ENCODE measurements at regions of chr3 and their contacts with region 1.

Region 1: GRCh38 chr3:69451594-69451993 is 65.7 kb upstream of the FRMD4B start:
- DNase-seq: peak; percentile 78
- H3K4me3 ChIP-seq: no peak overlapping the region
- H3K27ac ChIP-seq: peak overlapping the region in 1 of 2 experiments; percentile 94; a peak in 2 of 4 replicates
- H3K4me1 ChIP-seq: peaks cover 0 to 36% of the 10 kb centered on the region in 2 experiments; a peak in 2 of 4 replicates
- H3K27me3 ChIP-seq: no peaks in the 10 kb centered on the region
- CTCF ChIP-seq: peak; percentile 45
- EP300 ChIP-seq: peak in 1 of 2 experiments; percentile 98; a peak in 2 of 4 replicates
- RAD21 ChIP-seq: peak; percentile 76

Region 2: DNA sequence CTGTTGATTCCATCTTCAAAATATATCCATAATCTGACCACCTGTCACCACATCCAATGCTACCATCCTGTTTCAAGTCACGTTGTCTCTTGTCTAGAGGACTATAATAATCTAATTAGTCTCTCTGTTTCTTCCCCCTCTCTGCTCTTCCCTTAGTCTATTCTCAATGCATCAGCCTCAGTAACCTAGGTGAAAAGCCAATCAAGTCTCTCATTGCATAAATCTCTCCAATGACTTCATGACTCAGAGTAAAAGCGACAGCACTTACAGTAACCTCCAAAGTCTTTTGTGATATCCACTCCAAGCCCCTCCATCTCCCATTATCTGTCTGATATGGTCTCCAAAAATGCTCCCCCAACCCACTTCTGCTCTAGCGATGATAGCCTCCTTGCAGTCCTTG is 378.7 kb before region 1 on chr3:
- CTCF ChIA-PET with region 1: no interaction called
- POLR2A ChIA-PET with region 1: no interaction called
- DNase-seq: no peak
- H3K4me3 ChIP-seq: no peak overlapping the region
- H3K27ac ChIP-seq: no peak overlapping the region
- H3K4me1 ChIP-seq: peaks cover 0 to 5% of the 10 kb centered on the region in 2 experiments; a peak in 2 of 4 replicates
- H3K27me3 ChIP-seq: no peaks in the 10 kb centered on the region
- CTCF ChIP-seq: no peak
- EP300 ChIP-seq: no peak
- RAD21 ChIP-seq: no peak

Region 3: GRCh38 chr3:69425261-69425660 is 26.3 kb before region 1 on chr3:
- CTCF ChIA-PET with region 1: interaction called, 10 read pairs
- POLR2A ChIA-PET with region 1: no interaction called
- DNase-seq: peak; percentile 29
- H3K4me3 ChIP-seq: no peak overlapping the region
- H3K27ac ChIP-seq: no peak overlapping the region
- H3K4me1 ChIP-seq: peaks cover 12 to 23% of the 10 kb centered on the region in 2 experiments; a peak in 3 of 4 replicates
- H3K27me3 ChIP-seq: no peaks in the 10 kb centered on the region
- CTCF ChIP-seq: peak; percentile 82
- EP300 ChIP-seq: no peak
- RAD21 ChIP-seq: peak; percentile 81

Region 4: DNA sequence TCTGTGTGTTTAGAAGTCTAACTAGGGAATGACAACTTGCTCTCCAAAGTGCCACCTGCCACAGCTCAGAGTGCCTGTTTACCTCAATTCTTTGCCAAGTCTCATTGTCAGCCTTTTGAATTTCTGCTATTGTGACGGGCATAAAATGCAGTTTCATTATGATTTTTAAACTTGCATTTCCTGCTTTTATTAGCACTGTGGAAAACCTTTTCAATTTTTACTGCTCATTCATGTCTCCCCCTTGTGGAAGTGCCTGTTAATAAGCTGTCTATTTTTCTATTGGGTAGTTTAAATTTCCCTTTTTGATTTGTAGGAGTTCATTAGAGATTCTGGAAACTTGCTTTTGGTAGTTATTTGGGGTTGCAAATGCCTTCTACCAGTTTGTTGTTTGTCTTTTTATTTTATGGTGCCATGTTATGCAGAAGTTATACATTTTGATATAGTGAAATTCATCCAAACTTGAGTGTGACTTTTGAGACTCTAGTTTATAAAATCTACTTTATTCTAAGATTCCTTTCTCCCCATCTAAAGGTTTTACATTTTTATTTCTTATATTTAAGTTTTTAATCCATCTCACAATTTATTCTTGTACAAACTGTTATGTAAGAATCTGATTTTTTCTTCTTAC is 11.8 kb before region 1 on chr3:
- CTCF ChIA-PET with region 1: interaction called, 37 read pairs
- POLR2A ChIA-PET with region 1: interaction called, 4 read pairs
- DNase-seq: no peak
- H3K4me3 ChIP-seq: no peak overlapping the region; a peak in 1 of 4 replicates
- H3K27ac ChIP-seq: no peak overlapping the region
- H3K4me1 ChIP-seq: no peaks in the 10 kb centered on the region
- H3K27me3 ChIP-seq: no peaks in the 10 kb centered on the region
- CTCF ChIP-seq: peak; percentile 77
- EP300 ChIP-seq: no peak
- RAD21 ChIP-seq: peak; percentile 50

Region 5: GRCh38 chr3:69665026-69665737 is 213.6 kb after region 1 on chr3:
- CTCF ChIA-PET with region 1: interaction called, 40 read pairs
- POLR2A ChIA-PET with region 1: interaction called, 3 read pairs
- DNase-seq: peak; percentile 56
- H3K4me3 ChIP-seq: no peak overlapping the region
- H3K27ac ChIP-seq: peak overlapping the region in 1 of 2 experiments; percentile 58; a peak in 2 of 4 replicates
- H3K4me1 ChIP-seq: peaks cover 0 to 14% of the 10 kb centered on the region in 2 experiments; a peak in 2 of 4 replicates
- H3K27me3 ChIP-seq: peaks cover 9% of the 10 kb centered on the region; the same call in 1 of the 2 replicates
- CTCF ChIP-seq: no peak
- EP300 ChIP-seq: peak in 1 of 2 experiments; percentile 9; a peak in 1 of 4 replicates
- RAD21 ChIP-seq: no peak

Region 6: GRCh38 chr3:69671082-69671952 is 219.7 kb after region 1 on chr3:
- CTCF ChIA-PET with region 1: interaction called, 40 read pairs
- POLR2A ChIA-PET with region 1: interaction called, 6 read pairs
- DNase-seq: peak; percentile 68
- H3K4me3 ChIP-seq: no peak overlapping the region; a peak in 2 of 4 replicates
- H3K27ac ChIP-seq: peak overlapping the region in 1 of 2 experiments; percentile 83; a peak in 2 of 4 replicates
- H3K4me1 ChIP-seq: peaks cover 0 to 13% of the 10 kb centered on the region in 2 experiments; a peak in 2 of 4 replicates
- H3K27me3 ChIP-seq: no peaks in the 10 kb centered on the region
- CTCF ChIP-seq: peak; percentile 85
- EP300 ChIP-seq: peak in 1 of 2 experiments; percentile 91; a peak in 2 of 4 replicates
- RAD21 ChIP-seq: peak; percentile 91